Naive thymus-derived CD4-positive, alpha-beta T cell (primary cell): ENCODE measurements at regions of chr19 and their contacts with region 1.

Region 1: GRCh38 chr19:41563854-41564514 is 12.0 kb upstream of the CEACAM21 start:
- DNase-seq: peak in 6 of 9 donors; percentile 50 to 86 (median 72)
- ATAC-seq: peak; percentile 86
- H3K4me3 ChIP-seq: peak overlapping the region; percentile 49
- H3K4me3 Mint-ChIP-seq: peak overlapping the region; percentile 73 to 93 (median 87)
- H3K27ac ChIP-seq: peak overlapping the region; percentile 74
- H3K27ac Mint-ChIP-seq: peak overlapping the region; percentile 70 to 98 (median 92)
- H3K4me1 ChIP-seq: peaks cover 38 to 40% of the 10 kb centered on the region in 2 donors
- H3K4me1 Mint-ChIP-seq: peaks cover 55 to 95% (median 88%) of the 10 kb centered on the region in 7 donors
- H3K27me3 ChIP-seq: no peaks in the 10 kb centered on the region
- H3K27me3 Mint-ChIP-seq: peaks cover 0 to 8% (median 0%) of the 10 kb centered on the region in 5 donors

Region 2: DNA sequence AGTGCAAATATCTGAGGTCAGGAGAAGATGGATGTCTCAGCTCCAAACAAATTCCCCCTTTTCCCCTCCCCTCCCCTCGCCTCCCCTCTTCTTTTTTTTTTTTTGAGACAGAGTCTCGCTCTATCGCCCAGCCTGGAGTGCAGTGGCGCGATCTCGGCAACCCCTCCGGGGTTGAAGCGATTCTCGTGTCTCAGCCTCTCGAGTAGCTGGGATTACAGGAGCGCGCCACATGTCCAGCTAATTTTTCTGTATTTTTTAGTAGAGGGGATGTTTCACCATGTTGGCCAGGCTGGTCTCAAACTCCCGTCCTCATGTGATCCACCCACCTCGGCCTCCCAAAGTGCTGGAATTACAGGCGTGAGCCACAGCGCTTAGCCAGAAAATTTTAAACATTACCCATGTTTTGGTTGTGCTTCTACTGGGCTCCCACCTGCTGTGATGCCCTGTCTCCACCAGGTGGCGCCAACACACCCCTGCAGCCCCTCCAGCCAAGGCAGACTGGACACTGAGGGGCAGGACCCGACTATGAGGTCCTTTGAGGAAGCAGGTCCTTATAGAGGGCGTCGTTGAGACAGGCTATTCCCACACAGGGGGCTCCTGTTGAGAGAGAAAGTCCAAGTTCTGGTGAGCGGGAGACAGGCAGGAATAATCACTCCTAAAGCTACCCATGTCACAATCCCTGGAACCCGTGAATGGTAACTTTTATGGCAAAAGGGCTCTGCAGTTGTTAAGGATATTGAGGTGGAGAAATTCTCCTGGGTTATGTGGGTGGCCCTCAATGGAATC is 114.7 kb before region 1 on chr19:
- CTCF ChIA-PET with region 1: interaction called, 88 read pairs
- POLR2A ChIA-PET with region 1: interaction called, 3 read pairs
- intact Hi-C with region 1: loop called (anchors 1 to 2 kb)
- DNase-seq: peak; percentile 48 to 78 (median 67)
- ATAC-seq: peak; percentile 97
- H3K4me3 ChIP-seq: peak overlapping the region; percentile 41
- H3K4me3 Mint-ChIP-seq: peak overlapping the region; percentile 69 to 86 (median 80)
- H3K27ac ChIP-seq: no peak overlapping the region
- H3K27ac Mint-ChIP-seq: peak overlapping the region in 5 of 9 donors; percentile 59 to 80 (median 67)
- H3K4me1 ChIP-seq: peaks cover 0 to 10% of the 10 kb centered on the region in 2 donors
- H3K4me1 Mint-ChIP-seq: peaks cover 7 to 32% (median 13%) of the 10 kb centered on the region in 7 donors
- H3K27me3 ChIP-seq: no peaks in the 10 kb centered on the region
- H3K27me3 Mint-ChIP-seq: peaks cover 0 to 3% (median 0%) of the 10 kb centered on the region in 5 donors

Region 3: GRCh38 chr19:41515015-41515652 is 48.9 kb before region 1 on chr19:
- CTCF ChIA-PET with region 1: interaction called, 6 read pairs
- POLR2A ChIA-PET with region 1: interaction called, 4 read pairs
- intact Hi-C with region 1: loop called in 1 of 2 experiments (anchors 1 kb)
- DNase-seq: no peak
- ATAC-seq: no peak
- H3K4me3 ChIP-seq: no peak overlapping the region
- H3K4me3 Mint-ChIP-seq: no peak overlapping the region
- H3K27ac ChIP-seq: no peak overlapping the region
- H3K27ac Mint-ChIP-seq: no peak overlapping the region
- H3K4me1 ChIP-seq: no peaks in the 10 kb centered on the region
- H3K4me1 Mint-ChIP-seq: peaks cover 8 to 16% (median 14%) of the 10 kb centered on the region in 7 donors
- H3K27me3 ChIP-seq: no peaks in the 10 kb centered on the region
- H3K27me3 Mint-ChIP-seq: peaks cover 11 to 61% (median 46%) of the 10 kb centered on the region in 5 donors

Region 4: GRCh38 chr19:41541990-41542584 is 21.9 kb before region 1 on chr19:
- CTCF ChIA-PET with region 1: interaction called, 384 read pairs
- POLR2A ChIA-PET with region 1: interaction called, 518 read pairs
- intact Hi-C with region 1: loop called (anchors 1 kb)
- DNase-seq: peak; percentile 53 to 71 (median 64)
- ATAC-seq: peak; percentile 59
- H3K4me3 ChIP-seq: no peak overlapping the region
- H3K4me3 Mint-ChIP-seq: peak overlapping the region; percentile 51 to 77 (median 62)
- H3K27ac ChIP-seq: peak overlapping the region; percentile 26
- H3K27ac Mint-ChIP-seq: peak overlapping the region; percentile 44 to 97 (median 88)
- H3K4me1 ChIP-seq: peaks cover 38 to 42% of the 10 kb centered on the region in 2 donors
- H3K4me1 Mint-ChIP-seq: peaks cover 38 to 57% (median 52%) of the 10 kb centered on the region in 7 donors
- H3K27me3 ChIP-seq: no peaks in the 10 kb centered on the region
- H3K27me3 Mint-ChIP-seq: no peaks in the 10 kb centered on the region

Region 5: GRCh38 chr19:41597600-41598041 is 33.6 kb after region 1 on chr19:
- CTCF ChIA-PET with region 1: interaction called, 7 read pairs
- POLR2A ChIA-PET with region 1: interaction called, 4 read pairs
- intact Hi-C with region 1: loop called in 1 of 2 experiments (anchors 5 kb)
- DNase-seq: peak; percentile 35 to 77 (median 69)
- ATAC-seq: peak; percentile 93
- H3K4me3 ChIP-seq: no peak overlapping the region
- H3K4me3 Mint-ChIP-seq: peak overlapping the region in 3 of 10 donors; percentile 10 to 78 (median 19)
- H3K27ac ChIP-seq: no peak overlapping the region
- H3K27ac Mint-ChIP-seq: peak overlapping the region in 1 of 9 donors; percentile 17
- H3K4me1 ChIP-seq: no peaks in the 10 kb centered on the region
- H3K4me1 Mint-ChIP-seq: peaks cover 9 to 17% (median 12%) of the 10 kb centered on the region in 7 donors
- H3K27me3 ChIP-seq: no peaks in the 10 kb centered on the region
- H3K27me3 Mint-ChIP-seq: peaks cover 0 to 38% (median 9%) of the 10 kb centered on the region in 5 donors